K562 (cell line): ENCODE measurements at regions of chr1 and their contacts with region 1.

Region 1: GRCh38 chr1:206663832-206664652 is 20.7 kb upstream of the MAPKAPK2 start:
- DNase-seq: peak; percentile 83 to 90 (median 84)
- ATAC-seq: peak; percentile 85
- H3K4me3 ChIP-seq: peak overlapping the region; percentile 7; the same call in 1 of the 2 replicates
- H3K27ac ChIP-seq: no peak overlapping the region; the same call in 1 of the 3 replicates
- H3K4me1 ChIP-seq: peaks cover 34 to 56% of the 10 kb centered on the region in 2 experiments
- H3K27me3 ChIP-seq: no peaks in the 10 kb centered on the region
- CTCF ChIP-seq: peak; percentile 91 to 96 (median 92)
- EP300 ChIP-seq: no peak
- POLR2A ChIP-seq: no peak
- RAD21 ChIP-seq: peak; percentile 97 to 98

Region 2: GRCh38 chr1:206489980-206490770 is 173.9 kb before region 1 on chr1:
- CTCF ChIA-PET with region 1: interaction called, 13 read pairs
- POLR2A ChIA-PET with region 1: no interaction called
- in situ Hi-C with region 1: no loop called
- intact Hi-C with region 1: loop called (anchors 5 kb)
- DNase-seq: peak; percentile 90 to 94 (median 92)
- ATAC-seq: peak; percentile 96
- H3K4me3 ChIP-seq: no peak overlapping the region
- H3K27ac ChIP-seq: no peak overlapping the region
- H3K4me1 ChIP-seq: peaks cover 19 to 31% of the 10 kb centered on the region in 2 experiments
- H3K27me3 ChIP-seq: no peaks in the 10 kb centered on the region
- CTCF ChIP-seq: peak; percentile 99
- EP300 ChIP-seq: no peak
- POLR2A ChIP-seq: no peak
- RAD21 ChIP-seq: peak; percentile 98 to 99

Region 3: DNA sequence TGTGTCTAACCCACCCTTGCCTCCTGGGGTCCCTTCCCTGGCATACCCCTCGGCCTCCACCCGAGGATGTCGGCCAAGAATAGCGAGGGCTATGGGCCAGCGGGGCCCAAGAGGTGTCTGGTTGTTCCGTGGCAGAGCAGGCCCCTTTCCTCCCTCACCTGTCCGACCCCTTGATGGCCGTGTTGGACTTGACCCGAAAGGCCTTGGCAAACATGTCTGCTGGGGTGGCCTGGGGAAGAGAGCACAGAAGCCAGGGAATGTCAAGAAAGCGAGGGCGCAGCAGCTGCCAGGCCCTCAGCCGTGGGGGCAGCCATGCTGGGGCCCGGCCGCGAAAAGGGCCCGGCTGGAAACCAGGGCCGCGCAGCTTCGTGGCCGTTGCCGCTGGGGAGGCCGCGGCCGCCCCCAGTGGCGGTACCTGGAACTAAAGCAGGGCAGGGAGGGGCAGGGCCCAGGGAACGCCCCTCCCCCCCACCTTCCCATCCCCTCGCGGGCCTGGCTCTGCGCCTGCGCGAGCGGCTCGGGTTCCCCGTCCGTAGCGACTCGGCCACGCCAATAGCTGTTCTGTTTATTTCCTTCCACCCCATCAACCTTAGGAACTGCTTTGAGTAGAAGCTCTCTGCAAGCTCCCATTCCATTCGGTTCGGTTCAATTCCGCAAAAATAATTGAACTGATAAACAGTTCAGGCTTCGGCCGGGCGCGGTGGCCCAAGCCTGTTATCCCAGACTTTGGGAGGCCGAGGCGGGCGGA is 51.7 kb before region 1 on chr1 and contains the start of gene EIF2D:
- CTCF ChIA-PET with region 1: interaction called, 17 read pairs
- POLR2A ChIA-PET with region 1: interaction called, 7 read pairs
- in situ Hi-C with region 1: no loop called
- intact Hi-C with region 1: loop called (anchors 1 kb)
- DNase-seq: peak; percentile 98 to 100 (median 100)
- ATAC-seq: peak; percentile 98
- H3K4me3 ChIP-seq: peak within 1 kb of the TSS; percentile 97
- H3K27ac ChIP-seq: peak within 1 kb of the TSS; percentile 94
- H3K4me1 ChIP-seq: peaks cover 5 to 7% of the 10 kb centered on the region in 2 experiments; a peak in 4 of 5 replicates
- H3K27me3 ChIP-seq: no peaks in the 10 kb centered on the region
- CTCF ChIP-seq: peak; percentile 98 to 99 (median 98)
- EP300 ChIP-seq: no peak
- POLR2A ChIP-seq: peak; percentile 99
- RAD21 ChIP-seq: peak; percentile 73
- polyA plus RNA-seq, gene EIF2D: 86.9 to 130 TPM

Region 4: GRCh38 chr1:206635080-206635977 is 28.7 kb before region 1 on chr1 and contains the start of gene DYRK3:
- CTCF ChIA-PET with region 1: interaction called, 63 read pairs
- POLR2A ChIA-PET with region 1: interaction called, 29 read pairs
- in situ Hi-C with region 1: no loop called
- intact Hi-C with region 1: loop called (anchors 1 kb)
- DNase-seq: peak; percentile 98 to 99 (median 99)
- ATAC-seq: peak; percentile 93
- H3K4me3 ChIP-seq: peak within 1 kb of the TSS; percentile 87
- H3K27ac ChIP-seq: peak within 1 kb of the TSS; percentile 77
- H3K4me1 ChIP-seq: peaks cover 14 to 24% of the 10 kb centered on the region in 2 experiments
- H3K27me3 ChIP-seq: no peaks in the 10 kb centered on the region
- CTCF ChIP-seq: peak in 2 of 3 experiments; percentile 30; a peak in 2 of 6 replicates
- EP300 ChIP-seq: no peak; the same call in 1 of the 2 replicates
- POLR2A ChIP-seq: peak; percentile 90
- RAD21 ChIP-seq: no peak; a peak in 1 of 4 replicates
- polyA plus RNA-seq, gene DYRK3: 4.5 to 5.2 TPM

Region 5: GRCh38 chr1:206651958-206652890 is 11.8 kb before region 1 on chr1:
- CTCF ChIA-PET with region 1: interaction called, 3 read pairs
- POLR2A ChIA-PET with region 1: interaction called, 59 read pairs
- in situ Hi-C with region 1: no loop called
- intact Hi-C with region 1: no loop called
- DNase-seq: peak; percentile 28 to 83 (median 56)
- ATAC-seq: peak; percentile 85
- H3K4me3 ChIP-seq: no peak overlapping the region
- H3K27ac ChIP-seq: peak overlapping the region; percentile 71
- H3K4me1 ChIP-seq: peaks cover 16 to 60% of the 10 kb centered on the region in 2 experiments
- H3K27me3 ChIP-seq: no peaks in the 10 kb centered on the region
- CTCF ChIP-seq: 0 out of 6 replicates have a peak, but pooled peaks of 1 of the 3 experiments have one; percentile 19
- EP300 ChIP-seq: peak; percentile 99
- POLR2A ChIP-seq: no peak
- RAD21 ChIP-seq: peak; percentile 14 to 36; a peak in 2 of 4 replicates

Region 6: GRCh38 chr1:206674745-206675175 is 10.7 kb after region 1 on chr1:
- CTCF ChIA-PET with region 1: no interaction called
- POLR2A ChIA-PET with region 1: interaction called, 21 read pairs
- in situ Hi-C with region 1: no loop called
- intact Hi-C with region 1: no loop called
- DNase-seq: peak in 2 of 4 experiments; percentile 62 to 69
- ATAC-seq: no peak
- H3K4me3 ChIP-seq: no peak overlapping the region
- H3K27ac ChIP-seq: no peak overlapping the region; the same call in 2 of the 3 replicates
- H3K4me1 ChIP-seq: peaks cover 42 to 72% of the 10 kb centered on the region in 2 experiments
- H3K27me3 ChIP-seq: no peaks in the 10 kb centered on the region
- CTCF ChIP-seq: no peak
- EP300 ChIP-seq: no peak
- POLR2A ChIP-seq: no peak
- RAD21 ChIP-seq: no peak

Region 7: DNA sequence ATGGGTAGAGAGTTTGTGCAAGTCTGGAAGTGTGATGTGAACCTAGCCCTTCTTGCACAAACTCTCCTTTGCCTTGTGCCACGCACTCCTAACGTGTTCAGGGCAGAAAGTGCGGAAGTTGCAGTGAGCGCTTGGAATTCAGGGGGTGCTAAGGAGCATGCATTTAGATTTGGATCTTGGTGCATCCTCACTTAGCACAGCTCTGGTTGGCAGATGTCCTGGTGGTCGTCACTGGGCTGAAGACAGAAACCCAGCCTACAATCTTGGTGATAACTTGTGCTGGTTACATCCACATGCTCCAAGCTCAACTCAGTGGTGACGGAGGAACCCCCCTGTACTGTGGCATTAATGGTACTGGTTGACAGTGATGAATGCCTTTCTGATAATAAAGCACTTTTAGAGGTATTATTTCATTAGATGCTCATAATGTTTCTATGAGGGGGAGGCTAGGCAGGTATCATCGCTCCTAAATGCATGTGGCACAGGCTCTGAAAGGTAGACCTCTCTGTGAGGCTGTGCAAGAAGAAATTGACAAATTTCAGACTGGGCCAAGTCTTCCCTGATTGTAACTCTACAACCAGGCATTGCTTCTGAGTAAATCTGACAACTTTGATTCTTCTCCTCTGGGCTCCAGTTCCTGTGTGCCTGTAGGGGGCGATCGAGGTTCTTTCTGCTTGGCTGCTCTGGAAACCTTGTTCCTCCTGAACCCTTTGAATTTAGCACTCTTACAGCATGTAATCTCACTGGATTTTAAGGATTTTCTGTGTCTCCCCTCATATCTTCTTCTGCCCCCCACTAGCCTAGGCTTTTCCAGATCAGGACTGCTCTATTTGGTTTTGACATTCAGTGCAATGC is 61.3 kb after region 1 on chr1:
- CTCF ChIA-PET with region 1: no interaction called
- POLR2A ChIA-PET with region 1: interaction called, 3 read pairs
- in situ Hi-C with region 1: no loop called
- intact Hi-C with region 1: loop called (anchors 2 kb)
- DNase-seq: peak; percentile 69 to 82 (median 72)
- ATAC-seq: peak; percentile 88
- H3K4me3 ChIP-seq: no peak overlapping the region
- H3K27ac ChIP-seq: no peak overlapping the region
- H3K4me1 ChIP-seq: peaks cover 19 to 27% of the 10 kb centered on the region in 2 experiments
- H3K27me3 ChIP-seq: no peaks in the 10 kb centered on the region
- CTCF ChIP-seq: peak; percentile 77 to 87 (median 82)
- EP300 ChIP-seq: no peak
- POLR2A ChIP-seq: no peak
- RAD21 ChIP-seq: peak; percentile 45 to 51

Region 8: DNA sequence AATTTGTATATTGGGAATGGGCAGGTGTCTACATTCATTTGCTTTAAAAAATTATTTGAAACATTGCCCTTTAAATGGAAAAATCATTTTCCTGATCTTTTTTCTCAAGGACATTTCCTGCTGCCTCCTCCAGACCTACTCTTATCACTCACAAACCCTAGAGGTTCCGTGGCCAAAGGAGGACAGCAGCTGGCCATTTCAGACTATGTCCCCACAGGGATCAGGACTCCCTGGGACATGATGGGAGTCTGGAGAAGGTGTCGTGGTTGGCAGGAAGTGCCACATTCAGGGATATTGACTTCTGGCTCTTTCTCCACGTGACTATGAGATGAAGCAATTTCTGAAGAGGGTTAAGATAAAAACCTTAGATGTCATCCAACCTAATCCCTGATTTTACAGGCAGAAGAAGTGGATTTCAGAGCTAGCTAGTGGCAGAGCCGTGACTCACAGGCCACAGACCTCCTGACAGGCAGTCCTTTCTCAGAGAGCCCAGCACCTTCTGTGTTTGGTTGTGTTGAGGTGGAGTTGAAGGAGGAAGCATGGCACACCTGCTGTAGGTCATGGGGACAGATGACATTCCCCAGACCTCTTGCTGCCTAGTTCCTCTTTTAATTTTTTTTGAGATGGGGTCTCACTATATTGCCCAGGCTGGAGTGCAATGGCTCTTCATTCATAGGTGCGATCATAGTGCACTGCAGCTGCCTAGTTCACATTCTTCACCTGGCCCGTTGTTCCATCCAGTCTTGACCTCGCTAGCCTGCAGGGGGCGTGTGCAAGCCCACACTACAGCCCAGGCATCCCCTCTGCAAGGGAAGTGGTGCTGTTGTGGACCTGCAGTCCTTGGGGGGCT is 133.7 kb after region 1 on chr1:
- CTCF ChIA-PET with region 1: no interaction called
- POLR2A ChIA-PET with region 1: no interaction called
- in situ Hi-C with region 1: no loop called
- intact Hi-C with region 1: no loop called
- DNase-seq: peak; percentile 60 to 71 (median 66)
- ATAC-seq: peak; percentile 94
- H3K4me3 ChIP-seq: no peak overlapping the region
- H3K27ac ChIP-seq: no peak overlapping the region
- H3K4me1 ChIP-seq: no peaks in the 10 kb centered on the region; a peak in 1 of 5 replicates
- H3K27me3 ChIP-seq: peaks cover 5 to 42% of the 10 kb centered on the region in 2 experiments; a peak in 4 of 5 replicates
- CTCF ChIP-seq: peak; percentile 77 to 92 (median 82)
- EP300 ChIP-seq: no peak
- POLR2A ChIP-seq: no peak
- RAD21 ChIP-seq: peak; percentile 37 to 66

Region 9: GRCh38 chr1:207429963-207430362 is 765.9 kb after region 1 on chr1:
- CTCF ChIA-PET with region 1: no interaction called
- POLR2A ChIA-PET with region 1: no interaction called
- in situ Hi-C with region 1: no loop called
- intact Hi-C with region 1: no loop called
- DNase-seq: no peak
- ATAC-seq: no peak
- H3K4me3 ChIP-seq: no peak overlapping the region
- H3K27ac ChIP-seq: no peak overlapping the region
- H3K4me1 ChIP-seq: peaks cover 2 to 4% of the 10 kb centered on the region in 2 experiments; a peak in 1 of 5 replicates
- H3K27me3 ChIP-seq: no peaks in the 10 kb centered on the region
- CTCF ChIP-seq: no peak
- EP300 ChIP-seq: no peak
- POLR2A ChIP-seq: no peak
- RAD21 ChIP-seq: no peak